ENCODE measurements at regions of chr13 and their contacts with region 1.

Region 1: GRCh38 chr13:41222259-41222852 is 28.0 kb upstream of the KBTBD7 start:
- DNase-seq: peak; percentile 45
- H3K4me3 Mint-ChIP-seq: no peak overlapping the region
- H3K27ac Mint-ChIP-seq: no peak overlapping the region
- H3K4me1 Mint-ChIP-seq: peaks cover 9% of the 10 kb centered on the region
- H3K27me3 Mint-ChIP-seq: no peaks in the 10 kb centered on the region
- CTCF ChIP-seq: no peak

Region 2: GRCh38 chr13:40770934-40771618 is 451.3 kb before region 1 on chr13 and contains the start of gene MRPS31:
- CTCF ChIA-PET with region 1: no interaction called
- intact Hi-C with region 1: no loop called
- DNase-seq: peak; percentile 91
- H3K4me3 Mint-ChIP-seq: peak within 1 kb of the TSS; percentile 84
- H3K27ac Mint-ChIP-seq: peak within 1 kb of the TSS; percentile 76
- H3K4me1 Mint-ChIP-seq: peaks cover 9% of the 10 kb centered on the region
- H3K27me3 Mint-ChIP-seq: no peaks in the 10 kb centered on the region
- CTCF ChIP-seq: no peak
- total RNA-seq, gene MRPS31: 15.3 and 17.9 TPM in 2 replicates

Region 3: GRCh38 chr13:41075034-41075433 is 147.3 kb before region 1 on chr13:
- CTCF ChIA-PET with region 1: interaction called, 5 read pairs
- intact Hi-C with region 1: loop called (anchors 1 kb)
- DNase-seq: no peak
- H3K4me3 Mint-ChIP-seq: no peak overlapping the region
- H3K27ac Mint-ChIP-seq: no peak overlapping the region
- H3K4me1 Mint-ChIP-seq: no peaks in the 10 kb centered on the region
- H3K27me3 Mint-ChIP-seq: no peaks in the 10 kb centered on the region
- CTCF ChIP-seq: no peak

Region 4: DNA sequence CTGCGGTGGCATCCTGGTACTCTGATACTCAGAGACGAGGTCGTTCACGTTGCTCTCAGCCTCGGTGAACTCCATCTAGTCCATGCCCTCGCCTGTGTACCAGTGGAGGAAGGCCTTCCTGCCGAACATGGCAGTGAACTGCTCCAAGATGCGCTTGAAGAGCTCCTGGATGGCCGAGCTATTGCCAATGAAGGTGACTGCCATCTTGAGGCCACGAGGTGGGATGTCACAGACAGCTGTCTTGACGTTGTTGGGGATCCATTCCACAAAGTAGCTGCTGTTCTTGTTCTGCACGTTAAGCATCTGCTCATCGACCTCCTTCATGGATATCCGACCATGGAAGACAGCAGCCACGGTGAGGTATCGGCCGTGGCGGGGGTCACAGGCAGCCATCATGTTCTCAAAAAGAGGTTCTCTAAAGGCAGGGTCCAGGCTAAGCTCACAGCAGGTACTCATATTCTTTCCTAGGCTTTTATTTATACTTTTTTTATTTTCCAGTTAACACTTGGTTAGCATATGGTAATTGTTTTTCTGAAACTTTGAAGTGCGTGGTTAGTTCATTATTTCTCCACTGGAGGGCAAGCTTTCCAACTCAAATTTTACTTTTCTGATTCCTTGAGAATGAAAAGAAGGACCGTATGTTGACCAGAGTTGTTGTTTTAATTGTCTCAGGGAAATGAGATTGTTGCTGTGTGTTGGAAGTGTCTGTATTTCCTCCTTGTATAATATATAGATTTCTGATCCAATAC is 162.6 kb after region 1 on chr13:
- CTCF ChIA-PET with region 1: no interaction called
- intact Hi-C with region 1: no loop called
- DNase-seq: no peak
- H3K4me3 Mint-ChIP-seq: no peak overlapping the region
- H3K27ac Mint-ChIP-seq: no peak overlapping the region
- H3K4me1 Mint-ChIP-seq: no peaks in the 10 kb centered on the region
- H3K27me3 Mint-ChIP-seq: peaks cover 28% of the 10 kb centered on the region
- CTCF ChIP-seq: peak; percentile 22

Region 5: DNA sequence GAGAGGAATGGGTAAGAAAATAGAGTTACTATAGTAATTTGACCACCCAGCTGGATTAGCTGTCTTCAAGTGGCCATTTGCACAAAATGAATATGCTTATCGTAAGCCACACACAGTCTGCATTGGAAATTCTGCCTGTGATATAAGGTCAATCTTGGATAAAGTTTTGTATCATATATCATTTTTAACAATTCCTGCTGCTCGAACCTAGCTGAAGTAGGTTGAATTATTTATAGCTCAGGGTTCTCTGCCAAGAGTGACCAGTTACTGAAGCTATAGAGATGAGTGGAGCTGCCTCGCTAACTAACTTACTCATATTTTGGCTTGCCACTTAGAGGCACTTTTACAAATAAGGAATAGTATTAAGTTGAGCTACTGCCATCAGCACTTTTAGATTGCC is 455.9 kb after region 1 on chr13:
- CTCF ChIA-PET with region 1: no interaction called
- intact Hi-C with region 1: no loop called
- DNase-seq: no peak
- H3K4me3 Mint-ChIP-seq: no peak overlapping the region
- H3K27ac Mint-ChIP-seq: no peak overlapping the region
- H3K4me1 Mint-ChIP-seq: no peaks in the 10 kb centered on the region
- H3K27me3 Mint-ChIP-seq: no peaks in the 10 kb centered on the region
- CTCF ChIP-seq: no peak